ENCODE measurements at regions of chr11 and their contacts with region 1.

Region 1: DNA sequence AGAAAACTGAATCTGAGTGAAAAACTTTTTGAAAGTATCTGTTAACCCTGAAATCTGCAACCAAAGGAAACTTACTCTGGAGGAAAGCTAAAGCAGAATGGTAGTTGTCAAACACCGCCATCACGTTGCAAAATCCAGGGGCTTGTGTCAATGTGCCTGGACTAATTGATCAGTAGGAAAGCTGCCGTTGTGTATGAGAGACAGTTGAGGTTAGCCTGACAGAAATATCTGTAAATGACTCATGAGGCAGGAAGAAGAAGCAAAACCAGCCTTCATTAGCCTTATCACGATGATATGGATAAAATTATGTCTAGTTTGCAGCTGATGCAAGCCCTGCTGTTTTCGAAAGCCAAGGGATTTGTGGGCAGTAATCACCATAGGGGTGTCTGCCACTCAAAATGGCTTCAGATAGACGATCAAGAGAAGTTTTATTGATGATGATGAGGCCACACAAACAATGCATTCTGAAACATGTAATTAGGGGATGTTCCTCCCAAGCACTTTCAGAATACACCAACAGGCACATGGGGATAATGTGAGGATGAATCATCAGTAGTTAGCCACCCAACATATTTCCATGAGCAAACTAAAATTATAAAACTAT is 8.9 kb downstream of the SCGB1A1 start:
- DNase-seq: peak; percentile 62
- ATAC-seq: peak; percentile 64
- H3K4me3 Mint-ChIP-seq: peak overlapping the region; percentile 57
- H3K27ac Mint-ChIP-seq: peak overlapping the region; percentile 94
- H3K4me1 Mint-ChIP-seq: peaks cover 72% of the 10 kb centered on the region
- H3K27me3 Mint-ChIP-seq: peaks cover 9% of the 10 kb centered on the region

Region 2: GRCh38 chr11:62306227-62306626 is 121.5 kb before region 1 on chr11:
- CTCF ChIA-PET with region 1: no interaction called
- DNase-seq: no peak
- ATAC-seq: no peak
- H3K4me3 Mint-ChIP-seq: no peak overlapping the region
- H3K27ac Mint-ChIP-seq: no peak overlapping the region
- H3K4me1 Mint-ChIP-seq: peaks cover 7% of the 10 kb centered on the region
- H3K27me3 Mint-ChIP-seq: peaks cover 30% of the 10 kb centered on the region

Region 3: DNA sequence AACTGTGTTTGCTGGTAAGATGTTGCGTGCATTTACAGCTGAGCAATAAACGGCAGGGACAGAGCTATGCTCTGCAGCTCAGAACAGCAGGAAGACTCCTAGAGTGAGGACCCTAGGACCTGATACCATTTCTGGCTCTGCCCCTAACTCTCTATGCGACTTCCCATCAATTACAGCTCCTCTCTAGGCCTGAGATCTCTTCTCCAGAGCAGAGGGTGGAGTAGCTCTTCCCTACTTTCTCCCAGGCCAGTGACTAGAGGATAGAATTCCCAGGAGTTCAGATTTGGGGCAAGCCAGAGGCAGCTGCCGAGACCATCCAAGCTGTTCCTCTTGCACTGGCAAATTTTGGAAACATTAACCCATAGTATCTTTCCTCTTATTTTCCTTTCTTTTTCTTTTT is 21.7 kb before region 1 on chr11:
- CTCF ChIA-PET with region 1: interaction called, 42 read pairs
- DNase-seq: no peak
- ATAC-seq: no peak
- H3K4me3 Mint-ChIP-seq: no peak overlapping the region
- H3K27ac Mint-ChIP-seq: no peak overlapping the region
- H3K4me1 Mint-ChIP-seq: peaks cover 18% of the 10 kb centered on the region
- H3K27me3 Mint-ChIP-seq: no peaks in the 10 kb centered on the region

Region 4: GRCh38 chr11:62444236-62444833 is 16.6 kb after region 1 on chr11:
- CTCF ChIA-PET with region 1: interaction called, 12 read pairs
- DNase-seq: no peak
- ATAC-seq: no peak
- H3K4me3 Mint-ChIP-seq: peak overlapping the region; percentile 58
- H3K27ac Mint-ChIP-seq: no peak overlapping the region
- H3K4me1 Mint-ChIP-seq: peaks cover 10% of the 10 kb centered on the region
- H3K27me3 Mint-ChIP-seq: peaks cover 40% of the 10 kb centered on the region

Region 5: GRCh38 chr11:62468577-62468976 is 40.8 kb after region 1 on chr11:
- CTCF ChIA-PET with region 1: interaction called, 15 read pairs
- DNase-seq: no peak
- ATAC-seq: no peak
- H3K4me3 Mint-ChIP-seq: no peak overlapping the region
- H3K27ac Mint-ChIP-seq: no peak overlapping the region
- H3K4me1 Mint-ChIP-seq: peaks cover 8% of the 10 kb centered on the region
- H3K27me3 Mint-ChIP-seq: no peaks in the 10 kb centered on the region

Region 6: DNA sequence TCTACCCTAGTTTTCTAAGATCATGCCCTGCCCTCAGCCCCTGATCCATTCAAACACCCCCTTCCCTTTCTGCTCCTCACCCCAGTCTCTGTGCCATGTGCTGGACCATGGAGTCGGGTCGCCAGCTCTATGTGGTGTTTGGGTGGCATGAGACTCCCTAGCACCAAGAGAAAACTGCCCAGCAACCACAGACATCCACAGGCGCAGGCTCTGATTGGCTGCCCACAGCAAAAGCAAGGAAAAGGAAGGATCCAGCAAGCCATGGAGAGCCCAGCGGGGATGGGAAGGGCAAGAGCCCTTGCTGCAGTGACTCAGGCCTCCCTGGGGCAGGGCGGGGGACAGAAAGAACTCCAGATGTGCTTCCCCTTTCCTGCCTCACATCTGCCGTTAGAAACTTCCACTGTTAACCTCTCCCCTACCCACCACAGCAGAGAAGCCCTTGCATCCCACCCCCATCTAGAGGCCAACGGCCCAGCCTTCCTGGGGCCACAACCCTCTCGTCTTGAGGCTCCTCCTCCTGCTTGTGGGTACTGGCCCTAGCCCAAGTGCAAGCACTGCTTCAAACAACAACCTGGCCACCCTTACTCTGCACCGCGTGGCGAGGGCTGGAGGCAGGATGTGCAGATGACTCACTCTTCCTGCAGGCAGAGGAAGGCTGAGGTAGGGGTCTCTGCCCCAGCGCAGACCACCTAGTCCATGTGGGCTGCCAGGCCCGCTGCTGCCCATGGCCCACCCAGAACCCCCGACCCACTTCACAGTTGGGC is 128.6 kb after region 1 on chr11:
- CTCF ChIA-PET with region 1: interaction called, 207 read pairs
- DNase-seq: peak; percentile 98
- ATAC-seq: peak; percentile 64
- H3K4me3 Mint-ChIP-seq: peak overlapping the region; percentile 65
- H3K27ac Mint-ChIP-seq: peak overlapping the region; percentile 96
- H3K4me1 Mint-ChIP-seq: peaks cover 96% of the 10 kb centered on the region
- H3K27me3 Mint-ChIP-seq: peaks cover 2% of the 10 kb centered on the region

Region 7: DNA sequence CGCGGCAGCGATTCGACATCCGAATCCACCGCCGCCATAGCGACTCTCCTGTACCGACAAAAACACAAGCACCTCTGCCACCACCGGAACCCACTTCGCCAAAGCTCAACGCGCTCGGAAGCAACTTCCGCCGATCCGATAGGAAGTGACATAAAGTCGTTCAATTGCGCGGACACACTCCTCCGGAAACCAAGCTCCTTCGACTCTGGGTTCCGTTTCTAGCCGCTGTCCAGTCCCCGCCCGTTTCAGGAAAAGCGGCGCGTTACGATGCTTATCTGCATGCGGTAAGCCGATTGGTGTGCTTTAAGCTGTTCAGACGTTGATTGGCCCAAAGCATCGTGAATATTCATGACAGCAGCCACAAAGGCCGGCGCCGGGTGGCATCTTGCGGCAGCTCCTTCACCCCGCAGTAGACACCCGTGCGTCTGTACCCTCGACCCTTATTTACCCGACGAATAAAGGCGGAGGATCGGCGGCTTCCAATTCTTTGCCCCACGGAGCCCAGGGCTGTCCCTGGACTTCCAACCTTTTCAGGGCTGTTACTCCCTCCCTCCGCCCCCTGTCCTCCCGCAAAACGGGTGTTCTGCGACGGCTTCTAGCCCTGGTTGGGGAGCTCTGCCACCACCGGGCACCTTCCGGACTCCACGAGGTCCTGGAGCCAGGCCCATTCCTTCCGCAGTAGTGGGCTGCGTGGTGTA is 163.9 kb after region 1 on chr11 and contains the start of gene TUT1:
- CTCF ChIA-PET with region 1: interaction called, 31 read pairs
- DNase-seq: peak; percentile 99
- ATAC-seq: peak; percentile 92
- H3K4me3 Mint-ChIP-seq: peak within 1 kb of the TSS; percentile 99
- H3K27ac Mint-ChIP-seq: peak within 1 kb of the TSS; percentile 90
- H3K4me1 Mint-ChIP-seq: peaks cover 51% of the 10 kb centered on the region
- H3K27me3 Mint-ChIP-seq: no peaks in the 10 kb centered on the region
- total RNA-seq, gene TUT1: 24.7 to 29.6 TPM

Region 8: GRCh38 chr11:62678770-62679696 is 251.3 kb after region 1 on chr11 and contains the start of gene UBXN1:
- CTCF ChIA-PET with region 1: interaction called, 10 read pairs
- DNase-seq: peak; percentile 89
- ATAC-seq: peak; percentile 90
- H3K4me3 Mint-ChIP-seq: peak within 1 kb of the TSS; percentile 84
- H3K27ac Mint-ChIP-seq: peak within 1 kb of the TSS; percentile 90
- H3K4me1 Mint-ChIP-seq: peaks cover 34% of the 10 kb centered on the region
- H3K27me3 Mint-ChIP-seq: no peaks in the 10 kb centered on the region
- total RNA-seq, gene UBXN1: 115 to 152 TPM